ENCODE measurements at regions of chr2 and their contacts with region 1.

Region 1: GRCh38 chr2:85538486-85539360 is at the start of gene MAT2A:
- DNase-seq: peak; percentile 89
- H3K4me3 Mint-ChIP-seq: peak within 1 kb of the TSS; percentile 94
- H3K27ac Mint-ChIP-seq: peak within 1 kb of the TSS; percentile 94
- H3K4me1 Mint-ChIP-seq: peaks cover 48% of the 10 kb centered on the region
- H3K27me3 Mint-ChIP-seq: no peaks in the 10 kb centered on the region
- total RNA-seq, gene MAT2A: 196 to 199 TPM

Region 2: GRCh38 chr2:85354286-85355072 is 184.2 kb before region 1 on chr2 and contains the starts of genes ELMOD3 and RETSAT:
- CTCF ChIA-PET with region 1: interaction called, 5 read pairs
- POLR2A ChIA-PET with region 1: interaction called, 63 read pairs
- DNase-seq: peak; percentile 98
- H3K4me3 Mint-ChIP-seq: peak within 1 kb of the TSS; percentile 99
- H3K27ac Mint-ChIP-seq: peak within 1 kb of the TSS; percentile 93
- H3K4me1 Mint-ChIP-seq: peaks cover 45% of the 10 kb centered on the region
- H3K27me3 Mint-ChIP-seq: no peaks in the 10 kb centered on the region
- total RNA-seq, gene ELMOD3: 19.2 to 19.4 TPM
- total RNA-seq, gene RETSAT: 30.1 to 31.1 TPM

Region 3: DNA sequence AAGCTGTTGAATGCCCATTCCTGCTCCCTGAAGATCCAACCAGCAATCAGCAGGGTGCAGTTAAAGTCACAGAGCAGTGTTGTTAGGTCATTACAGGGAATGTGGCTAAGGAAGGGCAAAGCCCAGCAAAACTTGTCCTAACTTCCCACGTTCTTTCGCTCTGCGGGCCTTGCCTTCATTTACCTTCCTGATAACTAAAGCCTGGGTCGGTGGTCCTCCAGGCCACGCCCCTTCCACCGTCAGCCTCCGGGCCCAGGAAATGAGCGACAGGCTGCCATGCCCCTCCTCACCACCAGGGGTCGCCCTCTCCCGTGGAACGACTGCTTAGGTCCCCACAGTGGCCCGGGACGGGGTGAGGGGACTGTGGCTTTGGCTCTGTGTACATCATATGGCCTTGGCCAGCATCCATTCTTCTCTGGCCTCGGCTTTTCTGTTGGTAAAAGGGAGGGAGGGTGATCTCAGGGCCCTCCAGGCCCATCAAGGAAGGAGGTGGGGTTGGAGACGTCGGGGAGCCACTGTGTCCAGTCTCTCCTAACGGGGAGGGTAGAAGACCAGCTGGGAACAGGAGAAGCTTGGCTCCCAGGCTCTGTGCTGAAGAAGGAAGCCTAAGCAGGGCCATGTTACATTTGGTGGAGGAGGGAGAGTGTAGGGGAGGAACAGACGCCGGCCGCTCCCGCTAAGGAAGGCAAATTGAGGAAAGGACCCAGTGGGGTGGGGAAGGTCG is 118.0 kb before region 1 on chr2:
- CTCF ChIA-PET with region 1: interaction called, 50 read pairs
- POLR2A ChIA-PET with region 1: interaction called, 126 read pairs
- DNase-seq: peak; percentile 92
- H3K4me3 Mint-ChIP-seq: peak overlapping the region; percentile 66
- H3K27ac Mint-ChIP-seq: peak overlapping the region; percentile 77
- H3K4me1 Mint-ChIP-seq: peaks cover 33% of the 10 kb centered on the region
- H3K27me3 Mint-ChIP-seq: no peaks in the 10 kb centered on the region

Region 4: DNA sequence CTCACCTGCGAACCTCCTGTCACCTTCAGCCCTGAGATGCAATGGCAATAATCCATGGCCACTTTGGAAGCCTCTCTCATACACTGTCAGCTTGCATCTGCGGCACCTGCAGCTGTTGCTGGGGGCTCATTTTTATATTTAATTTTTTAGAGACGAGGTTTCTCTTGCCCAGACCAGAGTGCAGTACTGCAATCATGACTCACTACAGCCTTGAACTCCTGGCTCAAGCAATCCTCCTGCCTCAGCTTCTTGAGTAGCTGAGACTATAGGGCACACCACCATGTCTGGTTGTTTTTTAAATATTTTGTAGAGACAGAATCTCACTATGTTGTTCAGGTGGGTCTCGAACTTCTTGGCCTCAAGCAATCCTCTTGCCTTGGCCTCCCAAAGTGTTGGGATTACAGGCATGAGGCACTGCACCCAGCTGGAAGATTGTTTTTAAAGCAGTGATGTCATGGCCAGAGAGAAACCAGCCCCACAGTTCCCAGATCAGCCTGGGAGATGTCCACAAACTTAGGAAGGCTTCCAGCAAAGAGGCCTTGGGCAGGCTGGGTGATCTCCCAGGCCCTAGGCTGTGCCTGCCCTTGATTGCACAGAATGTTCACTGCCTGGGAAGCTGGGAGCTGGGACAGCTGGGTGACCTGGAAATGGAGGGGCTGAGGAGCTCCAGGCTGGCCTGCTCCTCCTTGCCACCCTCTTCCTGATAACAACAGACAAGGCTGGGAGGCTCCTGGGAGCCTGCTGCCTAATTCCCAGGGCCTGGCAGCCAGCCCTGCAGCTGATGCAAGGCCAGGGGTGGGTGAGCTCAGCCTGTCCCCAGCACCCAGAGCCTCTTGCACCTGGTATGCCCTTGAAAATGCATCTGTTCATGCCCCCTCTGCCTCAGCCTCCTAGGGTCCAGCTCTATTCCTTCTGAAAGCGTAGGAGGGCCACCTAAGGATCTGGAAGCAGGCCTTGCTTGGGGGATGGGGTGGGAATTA is 93.1 kb before region 1 on chr2:
- CTCF ChIA-PET with region 1: interaction called, 4 read pairs
- POLR2A ChIA-PET with region 1: interaction called, 143 read pairs
- DNase-seq: no peak
- H3K4me3 Mint-ChIP-seq: no peak overlapping the region
- H3K27ac Mint-ChIP-seq: no peak overlapping the region
- H3K4me1 Mint-ChIP-seq: peaks cover 4% of the 10 kb centered on the region
- H3K27me3 Mint-ChIP-seq: no peaks in the 10 kb centered on the region

Region 5: GRCh38 chr2:85561317-85561979 is 22.7 kb after region 1 on chr2 and contains the start of gene GGCX:
- CTCF ChIA-PET with region 1: interaction called, 7 read pairs
- POLR2A ChIA-PET with region 1: interaction called, 25 read pairs
- DNase-seq: peak; percentile 96
- H3K4me3 Mint-ChIP-seq: peak within 1 kb of the TSS; percentile 87
- H3K27ac Mint-ChIP-seq: peak within 1 kb of the TSS; percentile 90
- H3K4me1 Mint-ChIP-seq: peaks cover 36% of the 10 kb centered on the region
- H3K27me3 Mint-ChIP-seq: no peaks in the 10 kb centered on the region
- total RNA-seq, gene GGCX: 22.5 to 22.8 TPM

Region 6: DNA sequence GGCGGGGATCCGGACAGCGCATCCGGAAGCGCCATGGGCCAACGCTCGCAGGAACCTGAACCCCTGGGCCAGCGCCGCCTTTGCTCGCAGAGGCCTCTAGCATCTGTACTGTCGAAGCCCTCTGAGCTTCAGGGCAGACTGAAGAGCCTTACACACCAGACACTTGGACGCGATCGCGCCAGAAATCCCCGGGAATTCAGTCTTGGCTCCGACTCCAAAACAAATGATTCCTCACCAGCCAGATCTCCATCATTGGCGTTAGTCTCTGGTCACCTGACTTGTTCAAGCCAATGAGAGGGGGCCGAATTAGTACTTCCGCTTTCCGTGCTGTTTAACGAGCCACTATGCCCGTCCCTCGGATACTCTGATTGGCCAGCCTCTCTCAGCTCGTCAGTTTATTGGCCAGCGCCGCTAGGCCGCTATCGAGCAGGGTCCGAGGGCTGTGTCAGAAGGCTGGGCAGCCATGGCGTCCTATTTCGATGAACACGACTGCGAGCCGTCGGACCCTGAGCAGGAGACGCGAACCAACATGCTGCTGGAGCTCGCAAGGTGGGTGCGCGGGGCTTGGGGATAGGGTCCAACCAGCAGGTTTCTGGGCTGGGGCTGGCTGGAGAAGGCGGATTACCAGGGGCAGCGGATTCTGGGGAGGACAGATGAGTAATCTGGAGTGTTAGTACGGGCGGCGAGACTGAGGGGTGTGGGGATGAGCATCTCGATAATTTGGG is 56.7 kb after region 1 on chr2 and contains the start of gene RNF181:
- CTCF ChIA-PET with region 1: no interaction called
- POLR2A ChIA-PET with region 1: interaction called, 25 read pairs
- DNase-seq: peak; percentile 94
- H3K4me3 Mint-ChIP-seq: peak within 1 kb of the TSS; percentile 96
- H3K27ac Mint-ChIP-seq: peak within 1 kb of the TSS; percentile 90
- H3K4me1 Mint-ChIP-seq: peaks cover 32% of the 10 kb centered on the region
- H3K27me3 Mint-ChIP-seq: no peaks in the 10 kb centered on the region
- total RNA-seq, gene RNF181: 117 to 121 TPM

Region 7: GRCh38 chr2:85662899-85663593 is 124.3 kb after region 1 on chr2:
- CTCF ChIA-PET with region 1: no interaction called
- POLR2A ChIA-PET with region 1: no interaction called
- DNase-seq: no peak
- H3K4me3 Mint-ChIP-seq: no peak overlapping the region
- H3K27ac Mint-ChIP-seq: no peak overlapping the region
- H3K4me1 Mint-ChIP-seq: peaks cover 8% of the 10 kb centered on the region
- H3K27me3 Mint-ChIP-seq: no peaks in the 10 kb centered on the region

Region 8: GRCh38 chr2:85935746-85936208 is 397.1 kb after region 1 on chr2:
- CTCF ChIA-PET with region 1: no interaction called
- POLR2A ChIA-PET with region 1: no interaction called
- DNase-seq: no peak
- H3K4me3 Mint-ChIP-seq: no peak overlapping the region
- H3K27ac Mint-ChIP-seq: no peak overlapping the region
- H3K4me1 Mint-ChIP-seq: peaks cover 29% of the 10 kb centered on the region
- H3K27me3 Mint-ChIP-seq: peaks cover 12% of the 10 kb centered on the region

Measured in activated CD4-positive, alpha-beta memory T cell treated with anti-CD3 and anti-CD28 coated beads, Interleukin-2, amount 10 ng/mL, durations not matched to agents 7 days and 5 days (primary cell).